ENCODE measurements at regions of chr7 and their contacts with region 1.

Region 1: GRCh38 chr7:140175221-140176121 is 1.3 kb downstream of the KDM7A start:
- DNase-seq: peak; percentile 96
- H3K4me3 Mint-ChIP-seq: peak overlapping the region; percentile 82
- H3K27ac Mint-ChIP-seq: peak overlapping the region; percentile 93
- H3K4me1 Mint-ChIP-seq: peaks cover 45% of the 10 kb centered on the region
- H3K27me3 Mint-ChIP-seq: peaks cover 4% of the 10 kb centered on the region

Region 2: DNA sequence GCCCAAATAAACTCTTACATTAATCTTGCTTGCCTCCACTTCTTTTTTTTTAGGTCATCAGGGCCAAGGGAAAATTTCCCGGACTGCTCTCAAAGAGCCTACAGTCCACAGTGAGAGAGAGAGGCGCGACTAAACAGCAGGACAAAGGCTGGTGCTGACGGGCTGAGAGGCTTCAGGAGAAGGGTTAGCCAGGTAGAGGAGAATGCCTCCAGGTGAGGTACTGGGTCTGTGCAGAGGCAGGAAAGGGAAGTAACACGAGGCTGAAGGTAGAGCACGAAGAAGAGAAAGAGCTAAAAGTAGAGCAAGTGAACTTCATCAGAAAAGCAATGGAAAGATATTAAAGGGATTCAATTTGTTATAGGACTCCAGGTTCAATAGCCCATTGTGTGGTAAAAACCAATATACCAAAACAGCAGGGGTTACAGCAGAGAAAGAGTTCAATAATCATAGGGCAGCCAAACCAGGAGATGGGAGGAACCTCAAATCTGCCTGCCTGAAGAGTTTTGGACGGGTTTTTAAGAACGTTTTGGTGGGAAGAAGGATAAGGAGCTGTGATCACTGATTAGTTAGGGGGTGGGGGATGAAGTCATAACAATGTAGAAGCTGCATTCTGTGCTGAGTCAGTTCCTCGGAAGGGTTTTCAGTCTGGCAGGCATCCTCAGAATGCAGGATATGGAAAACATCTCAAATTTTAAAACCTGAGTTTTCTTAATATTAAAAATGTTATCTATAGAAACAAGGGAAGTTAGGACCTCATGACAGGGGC is 1927.7 kb before region 1 on chr7:
- CTCF ChIA-PET with region 1: no interaction called
- POLR2A ChIA-PET with region 1: no interaction called
- DNase-seq: no peak
- H3K4me3 Mint-ChIP-seq: no peak overlapping the region
- H3K27ac Mint-ChIP-seq: no peak overlapping the region
- H3K4me1 Mint-ChIP-seq: no peaks in the 10 kb centered on the region
- H3K27me3 Mint-ChIP-seq: peaks cover 5% of the 10 kb centered on the region

Region 3: DNA sequence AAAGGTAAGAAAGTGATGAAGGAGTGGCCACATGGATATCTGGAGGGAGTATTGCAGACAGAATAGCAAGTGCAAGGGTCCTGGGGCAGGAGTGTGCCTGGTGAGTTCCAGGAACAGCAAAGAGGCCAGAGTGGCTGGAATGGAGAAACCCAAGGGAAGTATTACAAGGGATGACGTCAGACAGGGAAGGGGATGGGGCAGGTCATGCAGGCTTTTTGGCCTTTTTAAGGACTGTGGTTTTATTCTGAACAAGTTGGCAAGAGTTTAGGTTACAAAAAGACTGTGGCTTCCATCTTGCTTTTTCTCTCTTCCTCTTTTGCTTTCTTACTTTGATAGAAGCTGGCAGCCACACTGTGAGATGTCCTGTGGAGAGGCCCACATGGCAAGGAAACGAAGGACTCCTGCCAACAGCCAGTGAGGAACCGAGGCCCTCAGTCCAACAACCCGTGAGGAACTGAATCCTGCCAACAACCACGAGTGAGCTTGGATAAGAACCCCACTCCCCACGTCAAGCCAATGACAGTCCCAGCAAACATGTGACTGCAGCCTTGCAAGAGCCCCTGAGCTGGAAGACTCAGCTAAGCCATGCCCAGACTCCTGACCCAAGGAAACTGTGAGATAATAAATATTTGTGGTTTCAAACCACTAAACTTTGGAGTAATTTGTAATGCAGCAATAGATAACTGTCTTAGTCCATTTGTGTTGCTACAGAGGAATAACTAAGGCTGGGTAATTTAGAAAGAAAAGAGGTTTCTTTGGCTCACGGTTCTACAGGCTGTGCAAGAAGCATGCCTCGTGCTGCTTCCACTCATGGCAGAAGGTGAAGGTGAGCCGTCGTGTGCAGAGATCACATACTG is 21.1 kb after region 1 on chr7:
- CTCF ChIA-PET with region 1: interaction called, 11 read pairs
- POLR2A ChIA-PET with region 1: no interaction called
- DNase-seq: no peak
- H3K4me3 Mint-ChIP-seq: no peak overlapping the region
- H3K27ac Mint-ChIP-seq: peak overlapping the region; percentile 32
- H3K4me1 Mint-ChIP-seq: peaks cover 11% of the 10 kb centered on the region
- H3K27me3 Mint-ChIP-seq: peaks cover 2% of the 10 kb centered on the region

Region 4: GRCh38 chr7:140230861-140231770 is 55.6 kb after region 1 on chr7:
- CTCF ChIA-PET with region 1: interaction called, 7 read pairs
- POLR2A ChIA-PET with region 1: interaction called, 13 read pairs
- DNase-seq: peak; percentile 61
- H3K4me3 Mint-ChIP-seq: peak overlapping the region; percentile 89
- H3K27ac Mint-ChIP-seq: peak overlapping the region; percentile 98
- H3K4me1 Mint-ChIP-seq: peaks cover 46% of the 10 kb centered on the region
- H3K27me3 Mint-ChIP-seq: no peaks in the 10 kb centered on the region